ENCODE measurements at regions of chr19 and their contacts with region 1.

Region 1: GRCh38 chr19:2950286-2951124 is 5.7 kb upstream of the ZNF77 start:
- DNase-seq: peak; percentile 100
- ATAC-seq: peak; percentile 97
- H3K4me3 Mint-ChIP-seq: peak overlapping the region; percentile 97
- H3K27ac Mint-ChIP-seq: peak overlapping the region; percentile 93
- H3K4me1 Mint-ChIP-seq: peaks cover 8% of the 10 kb centered on the region
- H3K27me3 Mint-ChIP-seq: no peaks in the 10 kb centered on the region
- CTCF ChIP-seq: no peak

Region 2: GRCh38 chr19:2887391-2887914 is 63.1 kb before region 1 on chr19:
- CTCF ChIA-PET with region 1: interaction called, 39 read pairs
- POLR2A ChIA-PET with region 1: no interaction called
- DNase-seq: no peak
- ATAC-seq: peak; percentile 95
- H3K4me3 Mint-ChIP-seq: no peak overlapping the region
- H3K27ac Mint-ChIP-seq: peak overlapping the region; percentile 28
- H3K4me1 Mint-ChIP-seq: peaks cover 8% of the 10 kb centered on the region
- H3K27me3 Mint-ChIP-seq: no peaks in the 10 kb centered on the region; the same call in 1 of the 2 replicates
- CTCF ChIP-seq: peak; percentile 25

Region 3: DNA sequence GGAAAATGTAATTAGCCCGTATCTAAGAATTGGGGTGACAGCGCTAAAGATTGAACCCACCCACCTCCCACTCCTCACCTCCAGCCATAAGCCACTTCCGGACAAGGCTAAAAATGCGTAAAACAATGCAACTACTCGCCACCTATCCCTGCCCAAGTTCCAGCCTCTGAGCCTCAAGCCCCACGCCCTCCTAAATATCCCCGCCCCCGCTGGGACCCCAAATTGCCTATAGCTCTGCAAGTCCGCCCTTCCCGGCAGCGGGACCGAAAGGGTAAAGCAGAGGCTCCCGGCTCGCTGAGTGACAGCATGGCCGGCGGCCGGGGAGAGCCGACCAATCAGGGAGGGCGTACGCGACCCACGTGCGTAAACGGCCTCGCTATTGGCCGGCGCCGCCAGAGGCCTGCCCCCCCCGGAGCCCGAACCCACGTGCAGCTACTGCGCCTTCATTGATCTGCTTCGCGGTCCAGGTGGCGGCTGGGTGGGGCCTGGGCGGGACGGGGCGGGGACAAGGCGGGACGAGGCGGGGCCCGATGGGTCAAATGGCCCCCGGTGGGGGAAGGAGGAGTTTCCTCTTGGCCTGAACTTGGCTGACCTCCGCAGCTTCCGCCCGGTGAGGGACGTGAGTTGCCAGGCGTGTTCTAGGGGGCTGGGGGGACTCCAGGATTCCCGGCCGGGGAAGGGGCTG is 26.6 kb after region 1 on chr19 and contains the start of gene TLE6:
- CTCF ChIA-PET with region 1: interaction called, 19 read pairs
- POLR2A ChIA-PET with region 1: no interaction called
- DNase-seq: peak; percentile 99
- ATAC-seq: peak; percentile 86
- H3K4me3 Mint-ChIP-seq: peak within 1 kb of the TSS; percentile 71
- H3K27ac Mint-ChIP-seq: no peak within 1 kb of the TSS
- H3K4me1 Mint-ChIP-seq: peaks cover 27% of the 10 kb centered on the region
- H3K27me3 Mint-ChIP-seq: peaks cover 58% of the 10 kb centered on the region
- CTCF ChIP-seq: no peak
- total RNA-seq, gene TLE6: 2.5 to 3.3 TPM (median 3.1 TPM) in 3 replicates

Region 4: DNA sequence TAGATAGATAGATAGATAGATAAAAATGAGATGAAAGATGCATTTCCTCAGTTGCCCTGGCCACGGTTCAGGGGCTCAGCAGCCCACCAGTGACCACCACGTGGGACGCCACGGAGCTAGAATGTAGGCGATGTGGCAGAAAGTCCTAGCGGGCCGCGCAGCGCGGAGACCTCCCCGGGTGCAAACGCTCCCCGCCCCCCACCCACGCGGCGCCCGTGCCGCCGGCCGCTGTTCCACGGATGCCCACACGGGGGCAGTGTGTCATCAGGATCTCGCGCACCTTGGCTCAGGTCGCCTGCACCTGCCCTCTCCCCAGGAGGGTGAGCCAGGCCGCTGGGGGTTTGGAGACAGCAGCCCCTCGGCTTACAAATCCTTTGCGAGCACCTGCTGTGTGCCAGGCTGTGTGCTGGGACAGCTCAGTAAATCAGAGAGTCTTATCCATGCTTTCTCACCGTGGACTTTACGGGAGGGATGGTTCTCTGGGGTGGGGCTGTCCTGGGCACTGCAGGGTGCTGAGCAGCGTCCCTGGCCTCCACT is 125.5 kb after region 1 on chr19:
- CTCF ChIA-PET with region 1: interaction called, 10 read pairs
- POLR2A ChIA-PET with region 1: no interaction called
- DNase-seq: peak; percentile 76
- ATAC-seq: peak; percentile 78
- H3K4me3 Mint-ChIP-seq: peak overlapping the region; percentile 54
- H3K27ac Mint-ChIP-seq: no peak overlapping the region
- H3K4me1 Mint-ChIP-seq: peaks cover 2% of the 10 kb centered on the region; the same call in 1 of the 2 replicates
- H3K27me3 Mint-ChIP-seq: peaks cover 4% of the 10 kb centered on the region
- CTCF ChIP-seq: peak; percentile 81

Region 5: GRCh38 chr19:3125900-3126524 is 175.5 kb after region 1 on chr19:
- CTCF ChIA-PET with region 1: interaction called, 84 read pairs
- POLR2A ChIA-PET with region 1: no interaction called
- DNase-seq: peak; percentile 85
- ATAC-seq: peak; percentile 98
- H3K4me3 Mint-ChIP-seq: no peak overlapping the region
- H3K27ac Mint-ChIP-seq: no peak overlapping the region
- H3K4me1 Mint-ChIP-seq: no peaks in the 10 kb centered on the region
- H3K27me3 Mint-ChIP-seq: no peaks in the 10 kb centered on the region
- CTCF ChIP-seq: peak; percentile 80

Measured in WTC11 (cell line).